Heart left ventricle (tissue), 16 donors: ENCODE measurements at regions of chr10 and their contacts with region 1.

Region 1: DNA sequence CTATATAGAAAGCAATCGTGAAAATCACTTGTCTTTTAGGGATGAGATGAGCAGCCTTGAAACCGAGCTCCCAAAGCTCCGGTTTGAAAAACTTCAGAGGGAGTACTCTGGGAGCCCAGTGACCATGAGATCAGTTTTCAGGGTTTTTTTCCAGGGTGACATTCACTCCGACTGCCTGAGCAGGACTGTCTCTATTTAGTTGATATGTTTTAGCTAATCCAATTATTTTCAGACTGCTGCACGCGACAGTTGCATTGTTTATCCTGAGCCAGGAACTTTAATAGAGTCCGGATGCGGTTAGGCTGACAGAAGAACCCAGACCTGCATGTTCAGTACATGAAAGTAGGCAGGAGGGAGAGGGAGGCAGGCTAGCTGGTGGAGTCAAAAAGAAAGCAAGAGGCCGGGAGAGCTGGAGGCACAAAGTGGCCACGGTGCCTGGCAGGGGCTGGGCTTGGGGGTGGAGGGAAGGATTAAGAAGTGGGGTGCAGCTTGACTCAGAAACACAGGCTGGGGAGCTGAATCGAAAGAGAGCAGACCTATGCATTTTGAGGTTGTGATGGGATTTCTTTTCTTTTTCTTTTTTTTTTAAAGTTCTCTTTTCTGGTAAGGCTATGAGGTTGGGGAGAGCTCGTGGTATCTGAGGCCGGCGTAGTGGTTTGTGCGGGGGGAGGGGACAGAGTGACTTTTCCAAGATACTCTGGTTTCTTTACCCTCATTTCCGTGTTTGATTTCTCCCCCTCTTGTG is 5.6 kb downstream of the GATA3 start:
- DNase-seq: no peak
- ATAC-seq: no peak
- H3K4me3 ChIP-seq: peak overlapping the region in 2 of 12 donors; percentile 4 to 40
- H3K27ac ChIP-seq: peak overlapping the region in 2 of 12 donors; percentile 43 to 81
- H3K4me1 ChIP-seq: peaks cover 0 to 46% (median 2%) of the 10 kb centered on the region in 12 donors
- H3K27me3 ChIP-seq: peaks cover under 1 to 93% (median 52%) of the 10 kb centered on the region in 9 donors
- CTCF ChIP-seq: no peak
- POLR2A ChIP-seq: no peak

Region 2: DNA sequence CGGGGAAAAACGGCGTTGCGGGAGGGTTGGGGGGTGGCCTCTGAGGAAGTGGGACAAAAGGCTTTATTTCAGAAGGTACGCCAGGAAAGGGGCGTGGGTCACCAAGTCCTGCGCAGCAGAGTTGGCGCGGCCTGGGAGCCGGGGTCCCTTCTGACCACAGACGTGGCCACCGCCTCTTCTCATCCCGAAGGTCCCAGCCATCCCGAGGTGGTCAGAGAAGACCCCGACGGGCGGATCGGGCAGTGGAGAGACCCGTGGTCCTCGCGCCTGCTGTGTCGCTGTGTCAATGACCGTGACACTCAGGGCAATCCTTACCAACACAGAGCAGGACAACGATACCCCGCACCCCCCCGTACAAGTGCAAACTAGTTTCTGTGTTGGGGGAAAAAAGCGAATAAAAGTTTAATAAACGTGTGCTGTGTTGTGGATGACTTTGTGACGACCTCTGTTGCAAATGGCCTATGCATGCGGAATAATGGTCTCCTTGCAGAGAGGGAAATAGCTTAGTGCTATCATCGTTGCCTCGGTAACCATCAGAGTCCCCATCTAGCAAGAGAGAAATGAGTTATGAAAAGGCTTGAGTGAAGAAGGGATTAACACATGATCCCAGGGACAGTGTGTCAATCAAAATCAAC is 25.0 kb before region 1 on chr10:
- intact Hi-C with region 1: no loop called
- DNase-seq: no peak
- ATAC-seq: no peak
- H3K4me3 ChIP-seq: peak overlapping the region in 6 of 12 donors; percentile 6 to 26 (median 22)
- H3K27ac ChIP-seq: no peak overlapping the region
- H3K4me1 ChIP-seq: peaks cover 0 to 44% (median 16%) of the 10 kb centered on the region in 12 donors
- H3K27me3 ChIP-seq: peaks cover 56 to 100% (median 87%) of the 10 kb centered on the region in 9 donors
- CTCF ChIP-seq: no peak
- POLR2A ChIP-seq: no peak

Region 3: GRCh38 chr10:8369666-8370065 is 309.5 kb after region 1 on chr10:
- intact Hi-C with region 1: loop called in 5 of 10 experiments (anchors 10 kb)
- DNase-seq: peak in 2 of 5 donors; percentile 26 to 31
- ATAC-seq: peak; percentile 51 to 80 (median 61)
- H3K4me3 ChIP-seq: no peak overlapping the region
- H3K27ac ChIP-seq: peak overlapping the region in 10 of 12 donors; percentile 41 to 85 (median 66)
- H3K4me1 ChIP-seq: peaks cover 0 to 11% (median 0%) of the 10 kb centered on the region in 12 donors
- H3K27me3 ChIP-seq: no peaks in the 10 kb centered on the region
- CTCF ChIP-seq: no peak
- POLR2A ChIP-seq: peak in 1 of 2 donors; percentile 33